Posterior vena cava (tissue), 2 donors: ENCODE measurements at regions of chr17 and their contacts with region 1.

Region 1: DNA sequence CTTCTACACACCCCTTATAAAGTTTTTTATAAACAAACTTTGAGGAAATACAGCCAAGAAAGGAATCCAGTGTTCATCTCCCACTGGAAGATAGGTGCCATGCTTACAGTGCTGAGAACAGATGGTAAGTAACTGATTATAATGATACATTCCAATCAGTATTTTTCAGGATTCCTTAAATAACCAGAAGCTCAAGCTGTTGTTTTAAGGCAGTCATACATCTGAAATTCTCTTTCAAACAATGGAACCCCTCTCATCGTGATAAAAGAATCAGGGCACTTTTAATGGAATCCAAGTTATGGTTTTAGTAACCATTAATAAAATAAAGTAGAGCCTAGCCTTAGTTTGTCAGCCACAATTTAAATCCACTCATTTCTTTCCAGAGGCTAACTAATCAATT is 56.1 kb upstream of the STAC2 start:
- DNase-seq: no peak

Region 2: DNA sequence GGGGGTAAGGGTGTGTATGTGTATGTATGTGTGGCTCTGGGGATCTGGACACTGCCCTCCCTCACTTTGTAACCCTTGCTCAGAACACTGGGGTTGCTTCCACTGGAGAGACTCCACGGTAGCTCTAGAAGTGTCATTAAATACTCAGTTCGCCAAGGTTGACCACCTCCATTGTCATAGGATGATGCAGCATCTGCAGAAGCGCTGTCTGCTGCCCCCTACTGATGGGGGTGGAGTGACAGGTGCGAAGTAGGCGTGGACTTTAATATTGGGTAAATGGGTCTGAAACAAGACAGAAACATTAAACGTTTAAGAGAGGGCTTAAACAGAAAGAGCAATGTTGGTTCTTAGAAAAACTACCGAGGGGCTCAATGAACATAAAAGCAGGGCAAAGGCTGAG is 20.5 kb before region 1 on chr17:
- intact Hi-C with region 1: no loop called
- DNase-seq: no peak

Region 3: DNA sequence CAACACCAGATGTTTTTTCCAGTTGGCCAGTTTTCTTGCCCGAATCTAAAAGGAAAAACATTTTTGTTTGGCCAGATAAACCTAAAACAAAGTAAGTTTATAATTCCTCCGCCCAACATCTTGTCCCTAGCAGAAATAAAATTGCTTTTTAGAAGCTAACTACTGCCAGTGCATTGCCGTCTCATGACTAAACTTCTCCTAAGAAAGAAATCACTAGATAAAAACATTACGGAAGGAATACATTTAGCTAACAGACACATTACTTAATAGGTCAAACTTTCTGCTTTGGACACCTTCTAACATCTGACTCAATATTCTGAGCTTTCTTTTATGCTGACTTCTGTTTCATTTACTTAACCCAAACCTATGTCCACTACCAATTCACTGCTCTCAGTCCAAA is 83.4 kb after region 1 on chr17:
- intact Hi-C with region 1: loop called in 1 of 2 experiments (anchors 10 kb)
- DNase-seq: no peak